Activated T-helper 2 cell treated with anti-CD3 and anti-CD28 coated beads, Interferon-gamma antibody, Interleukin-2, Interleukin-4, amounts not matched to agents 10 μg/mL and 5 μg/mL and 100 μg/mL, durations not matched to agents 14 hours and 24 hours and 36 hours (primary cell): ENCODE measurements at regions of chr14 and their contacts with region 1.

Region 1: DNA sequence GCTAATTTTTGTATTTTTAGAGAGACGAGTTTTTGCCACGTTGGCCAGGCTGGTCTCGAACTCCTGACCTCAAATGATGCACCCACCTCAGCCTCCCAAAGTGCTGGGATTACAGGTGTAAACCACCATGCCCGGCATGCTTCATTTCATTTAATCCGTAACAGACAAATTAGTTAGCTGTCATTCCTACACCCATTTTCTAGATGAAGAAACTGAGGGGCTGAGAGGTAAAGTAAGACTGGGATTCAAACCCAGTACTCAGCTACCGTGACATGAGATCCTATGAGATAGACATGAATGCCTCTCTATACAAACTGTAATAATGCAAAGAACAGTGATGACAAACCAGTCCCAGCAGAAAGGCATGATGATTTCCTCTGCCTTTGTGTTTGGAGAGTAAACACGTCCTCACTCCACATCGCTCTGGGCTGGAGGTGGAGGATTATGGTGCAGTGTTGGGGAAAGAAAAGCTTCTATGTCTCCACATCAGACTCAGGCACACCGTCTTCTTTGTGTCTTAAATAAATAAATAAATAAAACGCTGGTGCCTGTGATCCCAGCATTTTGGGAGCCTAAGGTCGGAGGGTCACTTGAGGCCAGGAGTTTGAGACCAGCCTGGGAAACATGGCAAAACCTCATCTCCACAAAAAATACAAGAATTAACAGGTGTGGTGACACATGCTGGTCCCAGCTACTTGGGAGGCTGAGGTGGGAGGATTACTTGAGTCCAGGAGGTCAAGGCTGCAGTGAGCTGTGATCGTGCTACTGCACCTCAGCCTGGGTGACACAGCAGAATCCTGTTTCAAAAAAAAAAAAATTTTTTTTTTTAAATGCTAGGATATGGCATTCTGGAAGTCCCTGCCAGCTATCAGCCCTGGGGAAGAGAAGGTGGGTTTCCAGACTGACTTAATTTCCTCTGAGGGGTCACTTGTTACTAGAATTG is 10.5 kb downstream of the VSX2 start:
- DNase-seq: no peak
- H3K4me3 Mint-ChIP-seq: no peak overlapping the region
- H3K27ac Mint-ChIP-seq: no peak overlapping the region
- H3K4me1 Mint-ChIP-seq: peaks cover 2% of the 10 kb centered on the region
- H3K27me3 Mint-ChIP-seq: peaks cover 40% of the 10 kb centered on the region

Region 2: DNA sequence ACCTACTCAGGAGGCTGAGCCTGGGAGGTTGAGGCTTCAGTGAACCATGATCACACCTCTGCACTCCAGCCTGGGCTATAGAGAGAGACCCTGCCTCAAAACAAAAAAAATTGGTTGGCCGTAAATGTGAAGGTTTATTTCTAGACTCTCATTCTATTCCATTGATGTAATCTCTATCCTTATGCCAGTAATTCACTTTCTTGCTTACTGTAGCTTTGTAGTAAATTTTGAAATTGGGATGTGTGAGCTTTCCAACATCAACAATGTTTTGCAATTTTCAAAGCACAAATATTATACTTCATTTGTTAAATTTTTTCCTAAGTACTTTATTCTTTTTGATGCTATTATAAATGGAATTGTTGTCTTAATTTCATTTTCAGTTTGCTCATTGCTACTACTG is 140.3 kb before region 1 on chr14:
- intact Hi-C with region 1: loop called (anchors 2 kb)
- DNase-seq: no peak
- H3K4me3 Mint-ChIP-seq: no peak overlapping the region
- H3K27ac Mint-ChIP-seq: no peak overlapping the region
- H3K4me1 Mint-ChIP-seq: no peaks in the 10 kb centered on the region
- H3K27me3 Mint-ChIP-seq: no peaks in the 10 kb centered on the region

Region 3: DNA sequence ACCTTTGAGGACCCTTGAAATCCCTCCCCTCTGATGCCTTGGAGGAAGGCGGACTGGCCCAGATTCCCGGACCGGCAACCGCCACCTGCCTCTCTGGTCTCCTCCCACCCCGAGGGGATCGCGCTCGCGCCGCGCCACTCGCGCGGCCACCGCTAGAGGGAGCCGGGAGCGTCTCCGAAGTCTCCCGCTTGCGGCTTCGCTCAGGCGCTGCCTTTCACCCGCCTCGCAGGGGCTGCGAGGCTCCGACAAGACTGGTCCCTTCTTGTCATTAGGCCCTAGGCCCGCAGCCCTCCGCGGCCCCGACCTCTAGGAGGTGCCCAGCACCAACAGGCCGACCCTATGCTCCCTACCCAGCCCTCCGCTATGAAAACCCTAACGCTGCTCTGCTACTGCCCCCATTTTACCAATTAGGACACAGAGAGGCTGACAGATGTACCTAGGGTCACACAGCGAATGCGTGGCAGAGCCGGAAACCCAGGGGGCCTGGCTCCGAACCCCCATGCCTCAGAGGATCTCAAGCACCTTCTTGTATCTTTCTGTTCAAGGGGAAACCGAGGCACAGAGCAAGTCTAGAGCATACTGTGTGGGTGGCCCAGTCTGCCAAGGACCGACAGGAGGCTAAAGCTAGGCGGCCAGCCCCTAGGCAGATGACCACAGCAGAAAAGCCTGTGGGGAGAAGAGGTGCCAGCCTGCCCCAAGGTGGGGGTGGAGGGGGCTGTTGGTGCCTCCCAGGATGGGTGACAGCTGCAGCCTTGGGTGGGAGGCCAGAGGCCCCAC is 31.8 kb before region 1 on chr14:
- intact Hi-C with region 1: loop called (anchors 2 kb)
- DNase-seq: peak; percentile 67
- H3K4me3 Mint-ChIP-seq: no peak overlapping the region
- H3K27ac Mint-ChIP-seq: no peak overlapping the region
- H3K4me1 Mint-ChIP-seq: no peaks in the 10 kb centered on the region
- H3K27me3 Mint-ChIP-seq: peaks cover 8% of the 10 kb centered on the region